MCF 10A (cell line): ENCODE measurements at regions of chr1 and their contacts with region 1.

Region 1: DNA sequence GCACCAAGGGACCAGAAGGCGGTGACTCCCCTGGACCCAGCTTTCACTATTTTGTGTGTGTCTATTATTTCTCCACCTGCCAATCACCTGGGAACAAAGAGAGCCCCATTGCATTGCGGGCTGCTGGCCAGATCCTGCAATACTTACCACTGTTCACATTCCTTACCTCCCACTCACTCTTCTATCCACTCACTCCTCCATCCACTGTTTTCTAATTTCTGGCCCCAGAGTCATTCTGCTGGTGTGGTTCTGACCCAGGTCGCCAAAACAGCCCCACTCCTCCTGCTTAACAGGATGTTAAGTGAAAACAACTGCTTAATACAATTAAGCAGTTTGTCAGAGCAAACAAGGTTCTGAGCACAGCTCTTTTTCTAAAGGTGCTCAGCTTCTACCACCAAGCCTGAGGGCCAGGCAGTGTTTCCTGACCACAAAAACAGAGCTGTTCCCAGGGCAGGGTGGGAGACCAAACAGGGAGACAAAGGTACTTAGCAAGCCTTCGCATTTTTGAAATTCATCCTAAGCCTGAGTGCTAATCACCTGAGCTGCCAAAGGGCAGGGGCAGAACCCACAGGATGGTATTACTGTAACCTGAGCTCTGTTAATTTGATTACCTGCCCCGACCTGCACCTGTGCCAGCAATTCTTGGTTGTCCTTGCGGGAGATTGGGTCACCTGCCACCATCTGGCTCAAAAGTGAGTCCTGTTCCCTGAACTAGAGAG is 38.5 kb upstream of the EFCAB14 start:
- DNase-seq: peak; percentile 76
- H3K4me3 Mint-ChIP-seq: no peak overlapping the region
- H3K27ac Mint-ChIP-seq: peak overlapping the region; percentile 43
- H3K4me1 Mint-ChIP-seq: peaks cover 70% of the 10 kb centered on the region
- H3K27me3 Mint-ChIP-seq: no peaks in the 10 kb centered on the region
- CTCF ChIP-seq: no peak

Region 2: DNA sequence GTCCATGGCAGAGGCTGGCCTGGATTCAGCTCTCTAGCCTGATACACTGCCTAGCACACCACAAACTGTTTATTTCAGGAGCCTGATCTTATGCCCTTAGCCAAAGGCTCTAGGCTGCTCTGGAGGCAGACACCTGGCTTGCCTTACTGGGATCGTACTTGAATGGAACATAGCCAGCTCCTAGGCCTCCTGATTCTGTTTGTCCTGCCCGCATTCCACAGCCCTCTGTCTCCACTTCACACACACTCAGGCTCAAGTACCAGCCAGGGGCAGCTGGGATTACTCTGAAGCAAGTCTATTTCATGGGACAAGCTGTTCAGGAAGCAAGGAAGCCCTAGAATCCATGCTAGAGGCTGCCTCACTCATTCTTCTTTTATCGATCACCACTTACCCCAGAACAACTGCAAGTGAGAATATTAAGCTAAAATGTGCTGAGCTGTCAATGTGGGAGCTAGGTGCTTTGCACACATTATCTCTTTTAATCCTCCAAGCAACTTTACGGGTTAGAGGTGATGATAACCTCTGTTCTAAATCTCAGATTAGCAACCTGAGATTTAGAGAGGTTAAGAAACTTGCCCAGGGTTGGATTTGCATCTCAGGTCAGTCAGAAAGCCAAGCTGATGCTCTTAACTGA is 10.4 kb after region 1 on chr1:
- CTCF ChIA-PET with region 1: interaction called, 4 read pairs
- POLR2A ChIA-PET with region 1: interaction called, 12 read pairs
- intact Hi-C with region 1: no loop called
- DNase-seq: no peak
- H3K4me3 Mint-ChIP-seq: no peak overlapping the region
- H3K27ac Mint-ChIP-seq: peak overlapping the region; percentile 36
- H3K4me1 Mint-ChIP-seq: no peaks in the 10 kb centered on the region
- H3K27me3 Mint-ChIP-seq: no peaks in the 10 kb centered on the region
- CTCF ChIP-seq: no peak

Region 3: DNA sequence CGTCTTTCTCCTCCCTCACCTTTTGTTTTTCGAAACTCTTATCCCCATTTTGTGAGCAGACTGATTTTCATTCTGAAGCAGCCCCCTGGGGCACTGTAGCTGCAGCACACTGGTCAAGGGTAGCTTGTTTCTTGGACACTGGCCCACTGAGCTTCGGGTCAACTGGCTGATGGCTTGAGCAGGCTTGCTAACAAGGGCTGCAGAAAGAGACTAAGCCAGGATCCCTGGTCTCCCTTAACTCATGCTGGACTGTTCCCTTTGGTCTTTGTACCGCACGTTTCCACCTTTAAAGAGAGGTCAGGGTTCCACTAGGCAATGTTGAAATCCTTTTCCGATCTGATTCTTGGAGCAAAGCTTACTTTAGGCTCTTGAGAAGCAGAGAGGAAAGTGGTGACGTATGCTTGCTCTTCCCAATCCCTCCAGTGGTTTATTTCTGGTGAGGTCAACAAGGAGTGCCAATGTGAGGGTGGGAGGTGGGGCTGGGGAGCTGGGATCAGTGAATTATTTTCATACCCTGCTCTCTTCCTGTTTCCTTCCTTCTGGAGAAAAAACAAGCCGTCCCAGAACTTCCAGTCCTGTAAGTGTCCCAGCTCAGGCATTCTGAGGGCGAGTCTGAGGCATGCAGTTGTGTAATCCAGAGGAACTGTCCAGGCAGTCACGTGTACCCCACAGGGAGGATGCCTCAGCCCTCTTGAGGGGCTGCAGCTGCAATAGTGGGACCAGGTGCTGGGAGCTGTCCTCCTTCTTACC is 49.0 kb after region 1 on chr1:
- CTCF ChIA-PET with region 1: interaction called, 6 read pairs
- POLR2A ChIA-PET with region 1: interaction called, 20 read pairs
- intact Hi-C with region 1: no loop called
- DNase-seq: peak; percentile 90
- H3K4me3 Mint-ChIP-seq: peak overlapping the region; percentile 46
- H3K27ac Mint-ChIP-seq: no peak overlapping the region
- H3K4me1 Mint-ChIP-seq: peaks cover 19% of the 10 kb centered on the region
- H3K27me3 Mint-ChIP-seq: no peaks in the 10 kb centered on the region
- CTCF ChIP-seq: no peak